ENCODE measurements at regions of chr11 and their contacts with region 1.

Region 1: GRCh38 chr11:46611526-46612304 is 5.3 kb downstream of the HARBI1 start:
- DNase-seq: no peak
- ATAC-seq: peak in 1 of 4 experiments; percentile 40
- H3K4me3 ChIP-seq: no peak overlapping the region
- H3K4me3 Mint-ChIP-seq: no peak overlapping the region
- H3K27ac ChIP-seq: no peak overlapping the region
- H3K27ac Mint-ChIP-seq: no peak overlapping the region
- H3K4me1 ChIP-seq: peaks cover 3 to 5% of the 10 kb centered on the region in 2 experiments
- H3K4me1 Mint-ChIP-seq: peaks cover 14 to 27% (median 22%) of the 10 kb centered on the region in 3 donors
- H3K27me3 ChIP-seq: no peaks in the 10 kb centered on the region
- H3K27me3 Mint-ChIP-seq: no peaks in the 10 kb centered on the region

Region 2: GRCh38 chr11:46686886-46687795 is 75.4 kb after region 1 on chr11:
- CTCF ChIA-PET with region 1: no interaction called
- POLR2A ChIA-PET with region 1: interaction called in 1 of 2 experiments, 10 read pairs
- DNase-seq: no peak
- ATAC-seq: no peak
- H3K4me3 ChIP-seq: no peak overlapping the region
- H3K4me3 Mint-ChIP-seq: no peak overlapping the region
- H3K27ac ChIP-seq: no peak overlapping the region
- H3K27ac Mint-ChIP-seq: no peak overlapping the region
- H3K4me1 ChIP-seq: no peaks in the 10 kb centered on the region
- H3K4me1 Mint-ChIP-seq: peaks cover 3 to 5% (median 4%) of the 10 kb centered on the region in 3 donors
- H3K27me3 ChIP-seq: no peaks in the 10 kb centered on the region
- H3K27me3 Mint-ChIP-seq: no peaks in the 10 kb centered on the region

Measured in T-cell (primary cell).